Activated CD4-positive, alpha-beta T cell treated with anti-CD3 and anti-CD28 coated beads, Interleukin-2, amount 10 ng/mL, durations not matched to agents 24 days and 14 days (primary cell): ENCODE measurements at regions of chr5 and their contacts with region 1.

Region 1: GRCh38 chr5:168836603-168837231 is 257.5 kb upstream of the PANK3 start:
- DNase-seq: peak; percentile 64
- H3K4me3 Mint-ChIP-seq: peak overlapping the region; percentile 69
- H3K27ac Mint-ChIP-seq: peak overlapping the region; percentile 80
- H3K4me1 Mint-ChIP-seq: peaks cover 20% of the 10 kb centered on the region
- H3K27me3 Mint-ChIP-seq: peaks cover 7% of the 10 kb centered on the region

Region 2: GRCh38 chr5:168747987-168748777 is 88.5 kb before region 1 on chr5:
- intact Hi-C with region 1: loop called (anchors 5 kb)
- DNase-seq: peak; percentile 80
- H3K4me3 Mint-ChIP-seq: no peak overlapping the region
- H3K27ac Mint-ChIP-seq: peak overlapping the region; percentile 73
- H3K4me1 Mint-ChIP-seq: peaks cover 6% of the 10 kb centered on the region
- H3K27me3 Mint-ChIP-seq: no peaks in the 10 kb centered on the region

Region 3: GRCh38 chr5:168793841-168794837 is 42.6 kb before region 1 on chr5:
- intact Hi-C with region 1: loop called (anchors 1 kb)
- DNase-seq: no peak
- H3K4me3 Mint-ChIP-seq: no peak overlapping the region
- H3K27ac Mint-ChIP-seq: peak overlapping the region; percentile 82
- H3K4me1 Mint-ChIP-seq: peaks cover 32% of the 10 kb centered on the region
- H3K27me3 Mint-ChIP-seq: no peaks in the 10 kb centered on the region

Region 4: GRCh38 chr5:168802337-168802736 is 34.4 kb before region 1 on chr5:
- intact Hi-C with region 1: loop called (anchors 1 kb)
- DNase-seq: peak; percentile 62
- H3K4me3 Mint-ChIP-seq: peak overlapping the region; percentile 66
- H3K27ac Mint-ChIP-seq: peak overlapping the region; percentile 94
- H3K4me1 Mint-ChIP-seq: peaks cover 25% of the 10 kb centered on the region
- H3K27me3 Mint-ChIP-seq: no peaks in the 10 kb centered on the region

Region 5: DNA sequence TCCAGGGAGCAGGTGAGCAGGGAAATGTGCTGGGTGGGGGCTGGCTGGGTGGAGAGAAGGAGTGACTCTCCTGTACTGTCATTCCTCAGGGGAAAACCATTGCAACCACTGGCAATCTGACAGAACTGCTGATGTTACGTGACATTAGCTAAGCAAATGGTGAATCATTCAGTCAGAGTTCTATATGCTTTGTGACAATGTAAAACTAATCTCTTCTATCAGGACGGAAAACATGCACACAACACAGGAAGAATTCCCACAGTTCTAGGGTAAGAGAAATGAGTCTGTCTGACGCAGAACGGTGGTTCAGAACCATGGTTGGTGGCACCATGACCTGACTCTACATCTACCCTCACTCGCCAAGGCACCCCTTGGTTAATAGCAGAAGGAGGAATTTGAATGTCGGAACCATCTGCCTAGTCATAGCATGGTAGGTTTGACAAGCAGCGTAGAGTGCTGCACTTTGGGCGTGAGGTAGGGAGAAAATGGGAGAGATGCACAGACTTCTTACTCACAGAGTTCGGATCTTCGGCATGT is 13.9 kb before region 1 on chr5:
- intact Hi-C with region 1: loop called (anchors 1 kb)
- DNase-seq: no peak
- H3K4me3 Mint-ChIP-seq: peak overlapping the region; percentile 21
- H3K27ac Mint-ChIP-seq: peak overlapping the region; percentile 92
- H3K4me1 Mint-ChIP-seq: peaks cover 12% of the 10 kb centered on the region
- H3K27me3 Mint-ChIP-seq: peaks cover 4% of the 10 kb centered on the region

Region 6: DNA sequence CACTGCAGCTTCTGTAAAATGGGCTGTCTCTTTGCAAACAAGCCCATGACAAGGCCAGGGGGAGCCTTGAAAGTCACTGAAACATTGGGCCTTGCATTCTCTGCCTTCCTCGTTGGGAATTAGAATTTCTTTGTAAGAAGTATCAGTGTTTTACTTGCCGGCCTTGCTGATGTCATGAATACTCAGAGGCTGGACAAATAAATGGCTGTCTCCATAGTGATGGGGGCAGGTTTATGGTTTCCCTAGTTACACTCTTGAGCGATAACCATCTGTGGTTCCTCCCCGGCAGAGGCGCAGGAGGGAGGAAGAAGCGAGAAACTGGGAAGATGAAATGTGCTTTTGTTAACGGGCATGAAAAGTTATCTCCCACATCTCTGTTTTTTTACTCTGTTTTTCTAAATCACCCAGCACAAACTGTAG is 15.2 kb after region 1 on chr5:
- intact Hi-C with region 1: loop called (anchors 1 kb)
- DNase-seq: peak; percentile 82
- H3K4me3 Mint-ChIP-seq: peak overlapping the region; percentile 64
- H3K27ac Mint-ChIP-seq: peak overlapping the region; percentile 84
- H3K4me1 Mint-ChIP-seq: peaks cover 19% of the 10 kb centered on the region
- H3K27me3 Mint-ChIP-seq: peaks cover 20% of the 10 kb centered on the region